ENCODE measurements at regions of chr1 and their contacts with region 1.

Region 1: DNA sequence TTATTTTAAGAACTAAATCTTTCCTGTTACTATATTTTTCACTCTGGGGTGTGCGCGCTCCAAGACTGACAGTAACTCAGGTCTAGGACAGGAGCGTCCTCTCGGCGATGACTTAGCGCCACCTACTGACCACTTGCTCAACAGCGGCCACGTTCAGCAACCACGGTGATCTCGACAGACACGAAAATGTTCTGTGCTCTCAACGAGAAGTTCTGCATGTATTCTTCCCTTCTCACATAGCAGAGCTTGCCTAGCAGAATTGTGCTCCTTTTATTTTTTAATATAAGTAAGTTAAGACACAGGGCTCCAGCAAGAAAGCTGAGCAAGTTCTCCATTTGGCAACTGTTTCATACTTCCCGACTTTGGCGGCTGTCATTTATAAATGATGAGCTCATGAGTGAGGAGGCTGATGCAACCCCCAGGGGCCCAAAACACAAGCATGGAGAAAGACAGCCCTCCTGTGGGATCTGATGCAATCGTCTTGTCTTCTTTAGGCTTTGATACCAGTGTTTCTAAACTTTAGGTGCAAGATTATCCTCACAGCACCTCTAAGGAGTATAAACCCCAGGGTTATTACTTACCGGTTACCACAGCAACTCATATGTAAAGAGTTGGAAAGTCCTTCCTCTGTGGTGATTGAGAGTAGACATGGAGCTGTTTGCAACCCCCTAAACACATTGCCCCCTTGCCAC is 92.6 kb downstream of the HHIPL2 start:
- DNase-seq: peak; percentile 88
- H3K4me3 Mint-ChIP-seq: no peak overlapping the region
- H3K27ac Mint-ChIP-seq: no peak overlapping the region
- H3K4me1 Mint-ChIP-seq: peaks cover 14% of the 10 kb centered on the region
- H3K27me3 Mint-ChIP-seq: no peaks in the 10 kb centered on the region

Region 2: DNA sequence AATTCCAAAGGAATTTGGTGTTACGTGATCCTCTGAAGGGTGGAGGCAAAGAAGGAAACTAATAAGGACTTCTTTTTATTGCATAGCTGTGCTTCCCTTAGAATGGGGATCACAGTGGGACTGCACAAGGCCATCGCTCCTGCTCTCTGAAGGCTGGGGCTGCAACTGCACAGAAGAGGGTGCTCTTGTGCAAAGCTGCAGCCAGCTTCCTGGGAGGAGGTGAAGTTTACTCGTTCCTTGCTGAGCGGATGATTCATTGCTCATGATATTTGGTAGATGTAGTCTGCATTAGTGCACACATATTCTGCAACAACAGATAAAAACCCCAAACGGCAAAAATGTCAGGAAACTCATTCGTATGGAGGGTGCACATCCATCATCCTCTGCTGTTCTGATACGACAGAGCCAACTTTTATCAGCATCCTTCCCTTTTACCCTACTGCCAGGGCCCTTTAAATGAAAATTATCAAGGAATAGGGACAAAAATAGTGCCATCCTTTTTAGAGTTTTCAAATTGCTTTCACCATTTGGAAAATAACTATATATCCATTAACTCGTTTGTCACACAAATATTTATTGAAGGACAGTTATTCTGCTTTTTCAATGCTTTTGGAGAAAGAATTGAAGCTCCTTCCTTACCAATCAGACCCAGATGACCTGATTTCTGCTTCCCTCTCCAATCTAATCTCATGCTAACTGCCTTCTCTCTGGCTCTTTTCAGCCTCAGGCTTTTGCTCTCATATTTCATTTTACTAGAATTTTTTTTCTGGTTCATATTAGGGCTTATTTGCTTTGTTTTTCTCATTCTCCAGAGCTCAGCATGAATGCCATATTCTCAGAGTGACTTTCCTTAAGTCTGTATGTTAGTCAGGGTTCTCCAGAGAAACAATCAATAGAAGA is 977.0 kb before region 1 on chr1:
- CTCF ChIA-PET with region 1: interaction called, 32 read pairs
- POLR2A ChIA-PET with region 1: no interaction called
- intact Hi-C with region 1: loop called (anchors 1 kb)
- DNase-seq: peak; percentile 70
- H3K4me3 Mint-ChIP-seq: no peak overlapping the region
- H3K27ac Mint-ChIP-seq: no peak overlapping the region
- H3K4me1 Mint-ChIP-seq: peaks cover 3% of the 10 kb centered on the region
- H3K27me3 Mint-ChIP-seq: peaks cover 6% of the 10 kb centered on the region

Region 3: DNA sequence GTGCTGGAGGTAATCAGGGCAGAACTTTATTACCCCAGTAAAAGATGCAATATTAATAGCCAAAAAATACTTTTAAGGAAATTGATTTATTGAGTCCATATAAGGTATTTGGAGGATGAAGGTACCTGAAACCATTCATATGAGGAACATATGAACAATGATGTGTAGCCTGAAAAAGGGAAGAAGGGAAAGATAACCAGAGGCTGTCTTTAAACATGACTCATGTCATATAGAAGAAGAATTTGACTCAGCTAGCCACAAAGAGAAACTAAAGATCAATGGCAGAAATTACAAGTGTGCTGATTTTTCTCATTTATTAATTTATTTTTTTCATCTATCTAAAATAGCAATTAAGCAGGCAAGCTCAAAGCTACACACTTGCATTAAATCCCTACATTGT is 577.2 kb before region 1 on chr1:
- CTCF ChIA-PET with region 1: no interaction called
- POLR2A ChIA-PET with region 1: no interaction called
- intact Hi-C with region 1: loop called (anchors 10 kb)
- DNase-seq: no peak
- H3K4me3 Mint-ChIP-seq: no peak overlapping the region
- H3K27ac Mint-ChIP-seq: no peak overlapping the region
- H3K4me1 Mint-ChIP-seq: peaks cover 8% of the 10 kb centered on the region
- H3K27me3 Mint-ChIP-seq: peaks cover 8% of the 10 kb centered on the region

Region 4: GRCh38 chr1:222167111-222167510 is 288.2 kb before region 1 on chr1:
- CTCF ChIA-PET with region 1: interaction called, 3 read pairs
- POLR2A ChIA-PET with region 1: no interaction called
- intact Hi-C with region 1: loop called (anchors 5 kb)
- DNase-seq: peak; percentile 38
- H3K4me3 Mint-ChIP-seq: no peak overlapping the region
- H3K27ac Mint-ChIP-seq: no peak overlapping the region
- H3K4me1 Mint-ChIP-seq: peaks cover 2% of the 10 kb centered on the region
- H3K27me3 Mint-ChIP-seq: no peaks in the 10 kb centered on the region

Region 5: GRCh38 chr1:222443566-222443965 is 11.8 kb before region 1 on chr1:
- CTCF ChIA-PET with region 1: interaction called, 29 read pairs
- POLR2A ChIA-PET with region 1: no interaction called
- intact Hi-C with region 1: no loop called
- DNase-seq: no peak
- H3K4me3 Mint-ChIP-seq: no peak overlapping the region
- H3K27ac Mint-ChIP-seq: no peak overlapping the region
- H3K4me1 Mint-ChIP-seq: peaks cover 17% of the 10 kb centered on the region
- H3K27me3 Mint-ChIP-seq: no peaks in the 10 kb centered on the region